ENCODE measurements at regions of chr9 and their contacts with region 1.

Region 1: GRCh38 chr9:125161284-125161918 is 18.1 kb upstream of the SCAI start:
- DNase-seq: no peak
- ATAC-seq: no peak
- H3K4me3 Mint-ChIP-seq: no peak overlapping the region
- H3K27ac Mint-ChIP-seq: no peak overlapping the region; the same call in 1 of the 2 replicates
- H3K4me1 Mint-ChIP-seq: no peaks in the 10 kb centered on the region
- H3K27me3 Mint-ChIP-seq: no peaks in the 10 kb centered on the region
- CTCF ChIP-seq: no peak

Region 2: DNA sequence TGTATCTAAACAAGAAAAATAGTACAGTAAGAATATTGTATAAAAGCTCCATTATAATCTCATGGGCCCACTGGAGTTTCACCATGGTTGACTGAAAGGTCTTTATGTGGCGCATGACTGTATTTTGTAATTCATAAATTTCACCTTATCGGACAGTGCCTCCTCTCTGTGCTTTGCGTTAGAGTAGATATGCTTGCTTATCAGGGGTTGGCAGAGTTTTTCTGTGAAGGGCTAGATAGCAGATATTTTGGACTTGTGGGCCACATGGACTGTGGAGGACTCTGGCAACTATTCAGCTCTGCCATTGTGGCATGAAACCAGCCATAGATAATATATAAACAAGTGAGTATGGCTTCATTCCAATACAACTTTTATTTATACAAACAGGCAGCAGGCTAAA is 123.5 kb after region 1 on chr9:
- CTCF ChIA-PET with region 1: no interaction called
- POLR2A ChIA-PET with region 1: interaction called, 14 read pairs
- DNase-seq: no peak
- ATAC-seq: no peak
- H3K4me3 Mint-ChIP-seq: no peak overlapping the region
- H3K27ac Mint-ChIP-seq: no peak overlapping the region
- H3K4me1 Mint-ChIP-seq: no peaks in the 10 kb centered on the region
- H3K27me3 Mint-ChIP-seq: no peaks in the 10 kb centered on the region
- CTCF ChIP-seq: no peak